ENCODE measurements at regions of chr4 and their contacts with region 1.

Region 1: DNA sequence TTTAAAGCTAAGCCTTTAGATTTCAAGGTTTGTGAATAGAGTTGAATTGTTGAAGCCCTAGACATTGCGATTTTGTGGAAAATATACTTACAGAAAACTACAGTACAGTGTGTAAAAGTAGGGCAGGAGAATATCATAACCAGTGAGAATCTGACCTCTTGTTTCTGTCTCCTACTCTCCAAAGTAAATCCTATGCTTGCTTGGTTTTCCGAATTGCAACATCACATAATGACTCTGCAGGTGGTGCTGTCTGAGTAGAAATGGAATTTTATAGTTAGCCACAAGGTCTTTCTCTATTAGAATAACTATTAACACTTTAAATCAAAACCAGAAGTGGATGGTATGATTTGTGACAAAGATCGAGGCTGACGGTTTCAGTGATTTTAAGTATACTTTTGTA is 505.6 kb downstream of the RAPGEF2 start:
- DNase-seq: no peak
- H3K4me3 ChIP-seq: no peak overlapping the region
- H3K27ac ChIP-seq: no peak overlapping the region
- H3K4me1 ChIP-seq: no peaks in the 10 kb centered on the region
- H3K27me3 ChIP-seq: no peaks in the 10 kb centered on the region
- CTCF ChIP-seq: no peak
- EP300 ChIP-seq: no peak
- POLR2A ChIP-seq: no peak

Region 2: DNA sequence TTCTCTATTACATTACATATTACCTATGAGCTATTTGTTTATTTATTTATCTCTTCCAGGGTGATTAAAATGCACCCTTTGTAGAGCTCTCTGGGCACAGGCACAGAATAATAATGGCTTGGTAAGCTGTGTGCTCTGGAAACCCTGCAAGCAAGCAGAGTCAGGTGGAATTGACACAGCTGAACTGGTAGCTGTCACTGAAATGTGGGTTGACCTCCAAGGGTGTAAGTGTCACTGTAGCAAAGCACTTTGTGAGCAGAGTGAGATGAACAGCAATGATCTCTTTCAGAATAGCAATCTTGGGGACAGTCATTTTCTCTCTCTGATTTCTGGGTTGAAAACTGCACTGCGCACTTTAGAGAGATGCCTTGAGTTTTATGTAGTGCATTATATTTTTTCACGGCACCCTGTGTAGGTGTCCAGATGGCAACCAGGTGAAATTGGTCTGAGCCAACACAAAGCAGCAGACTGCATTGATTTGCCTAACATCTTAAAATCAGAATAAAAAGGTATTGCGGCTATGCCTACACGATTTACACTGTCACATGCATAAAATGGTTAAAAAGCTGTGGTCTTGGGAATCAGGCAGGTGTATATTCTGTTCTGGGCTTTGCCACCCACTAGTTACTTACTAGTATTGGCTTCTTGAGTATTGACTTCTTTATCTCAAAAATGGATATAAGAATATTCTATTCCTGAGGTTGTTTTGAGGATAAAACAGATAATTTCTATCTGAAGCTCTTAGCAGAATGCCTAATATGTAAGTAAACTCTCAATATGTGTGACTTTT is 55.3 kb before region 1 on chr4:
- in situ Hi-C with region 1: no loop called
- intact Hi-C with region 1: no loop called
- DNase-seq: no peak
- H3K4me3 ChIP-seq: no peak overlapping the region
- H3K27ac ChIP-seq: no peak overlapping the region
- H3K4me1 ChIP-seq: no peaks in the 10 kb centered on the region
- H3K27me3 ChIP-seq: no peaks in the 10 kb centered on the region
- CTCF ChIP-seq: no peak
- EP300 ChIP-seq: no peak
- POLR2A ChIP-seq: no peak

Region 3: GRCh38 chr4:159669094-159669493 is 60.7 kb after region 1 on chr4:
- in situ Hi-C with region 1: loop called in 1 of 4 experiments (anchors 10 kb)
- intact Hi-C with region 1: no loop called
- DNase-seq: no peak
- H3K4me3 ChIP-seq: no peak overlapping the region
- H3K27ac ChIP-seq: no peak overlapping the region
- H3K4me1 ChIP-seq: no peaks in the 10 kb centered on the region
- H3K27me3 ChIP-seq: no peaks in the 10 kb centered on the region
- CTCF ChIP-seq: no peak
- EP300 ChIP-seq: no peak
- POLR2A ChIP-seq: no peak